ENCODE measurements at regions of chr12 and their contacts with region 1.

Region 1: GRCh38 chr12:851913-852312 is 97.6 kb downstream of the RAD52 start:
- DNase-seq: peak in 1 of 2 experiments; percentile 66
- H3K4me3 ChIP-seq: no peak overlapping the region
- H3K27ac ChIP-seq: peak overlapping the region; percentile 18
- H3K4me1 ChIP-seq: peaks cover 17% of the 10 kb centered on the region
- H3K27me3 ChIP-seq: no peaks in the 10 kb centered on the region
- CTCF ChIP-seq: no peak

Region 2: GRCh38 chr12:366820-367219 is 485.1 kb before region 1 on chr12:
- CTCF ChIA-PET with region 1: no interaction called
- POLR2A ChIA-PET with region 1: no interaction called
- intact Hi-C with region 1: no loop called
- DNase-seq: no peak
- H3K4me3 ChIP-seq: no peak overlapping the region
- H3K27ac ChIP-seq: no peak overlapping the region
- H3K4me1 ChIP-seq: no peaks in the 10 kb centered on the region
- H3K27me3 ChIP-seq: no peaks in the 10 kb centered on the region
- CTCF ChIP-seq: no peak

Region 3: DNA sequence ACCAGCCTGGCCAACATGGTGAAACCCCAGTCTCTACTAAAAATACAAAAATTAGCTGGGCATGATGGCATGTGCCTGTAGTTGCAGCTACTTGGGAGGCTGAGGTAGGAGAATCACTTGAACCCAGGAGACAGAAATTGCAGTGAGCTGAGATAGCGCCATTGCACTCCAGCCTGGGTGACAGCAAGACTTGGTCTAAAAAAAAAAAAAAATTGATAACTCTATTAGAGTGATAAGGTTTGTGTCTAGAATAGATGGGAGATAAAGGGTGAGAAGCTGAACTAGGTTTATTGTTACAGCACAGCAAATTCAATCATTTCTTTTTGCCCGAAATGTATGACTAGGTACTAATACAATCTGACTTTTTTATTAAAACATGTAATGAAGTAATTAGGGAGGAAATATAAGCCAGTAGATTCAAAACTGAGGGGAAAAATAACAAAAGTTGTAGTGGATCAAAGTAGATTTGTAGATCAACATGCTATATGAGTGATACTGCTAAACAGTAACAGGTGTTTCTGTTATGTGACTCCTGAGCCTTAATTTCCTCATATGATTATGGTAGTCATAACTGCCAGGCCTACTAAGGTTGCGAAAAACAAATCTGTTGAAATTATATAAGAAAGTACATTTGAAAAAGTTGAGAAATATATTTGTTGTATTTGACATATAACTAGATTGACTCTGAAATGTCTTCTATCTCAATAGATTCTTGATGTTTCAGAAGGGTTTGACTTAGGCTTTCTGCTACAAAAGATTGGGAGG is 16.0 kb before region 1 on chr12:
- CTCF ChIA-PET with region 1: no interaction called
- POLR2A ChIA-PET with region 1: no interaction called
- intact Hi-C with region 1: no loop called
- DNase-seq: peak in 1 of 2 experiments; percentile 46
- H3K4me3 ChIP-seq: no peak overlapping the region
- H3K27ac ChIP-seq: 0 out of 2 replicates have a peak overlapping the region, but pooled peaks have one; percentile 2
- H3K4me1 ChIP-seq: no peaks in the 10 kb centered on the region
- H3K27me3 ChIP-seq: no peaks in the 10 kb centered on the region
- CTCF ChIP-seq: no peak

Region 4: DNA sequence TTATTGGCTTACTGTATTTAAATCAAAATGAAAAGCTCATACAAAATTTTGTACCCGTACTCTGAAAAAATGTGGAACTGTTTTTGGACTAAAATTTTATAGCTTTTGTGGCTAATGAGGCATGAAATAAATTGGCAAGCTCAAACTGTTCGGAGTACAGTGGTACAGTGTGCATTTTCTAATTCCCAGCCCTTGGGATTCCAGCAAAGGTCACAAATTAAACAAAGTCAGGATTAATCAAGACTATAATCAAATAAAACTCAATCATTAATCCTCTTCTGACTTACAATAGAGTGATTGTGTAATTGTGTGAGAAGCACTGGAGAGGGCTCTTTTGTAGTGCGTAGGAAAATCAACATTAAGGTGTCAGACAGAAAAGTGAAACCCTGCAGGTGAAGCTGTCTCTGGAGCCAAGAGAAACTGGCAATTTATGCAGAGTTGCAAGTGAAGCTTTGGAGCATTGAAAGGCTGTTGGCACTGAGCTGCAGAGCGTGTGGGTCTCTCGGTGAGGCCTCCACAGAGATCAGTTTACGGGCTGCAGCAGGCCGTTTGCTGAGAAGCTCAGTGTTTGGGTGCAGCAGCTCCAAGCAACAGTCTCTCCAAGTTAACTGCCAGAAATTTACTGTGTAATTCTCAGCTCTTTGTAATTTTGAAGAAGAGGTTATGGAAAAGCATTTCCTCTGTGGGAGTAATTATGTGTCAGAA is 466.6 kb after region 1 on chr12:
- CTCF ChIA-PET with region 1: no interaction called
- POLR2A ChIA-PET with region 1: no interaction called
- intact Hi-C with region 1: loop called (anchors 5 kb)
- DNase-seq: peak in 1 of 2 experiments; percentile 49
- H3K4me3 ChIP-seq: no peak overlapping the region
- H3K27ac ChIP-seq: no peak overlapping the region
- H3K4me1 ChIP-seq: no peaks in the 10 kb centered on the region; the same call in 1 of the 2 replicates
- H3K27me3 ChIP-seq: no peaks in the 10 kb centered on the region
- CTCF ChIP-seq: no peak

Measured in PC-9 (cell line).